ENCODE measurements at regions of chr1 and their contacts with region 1.

Region 1: DNA sequence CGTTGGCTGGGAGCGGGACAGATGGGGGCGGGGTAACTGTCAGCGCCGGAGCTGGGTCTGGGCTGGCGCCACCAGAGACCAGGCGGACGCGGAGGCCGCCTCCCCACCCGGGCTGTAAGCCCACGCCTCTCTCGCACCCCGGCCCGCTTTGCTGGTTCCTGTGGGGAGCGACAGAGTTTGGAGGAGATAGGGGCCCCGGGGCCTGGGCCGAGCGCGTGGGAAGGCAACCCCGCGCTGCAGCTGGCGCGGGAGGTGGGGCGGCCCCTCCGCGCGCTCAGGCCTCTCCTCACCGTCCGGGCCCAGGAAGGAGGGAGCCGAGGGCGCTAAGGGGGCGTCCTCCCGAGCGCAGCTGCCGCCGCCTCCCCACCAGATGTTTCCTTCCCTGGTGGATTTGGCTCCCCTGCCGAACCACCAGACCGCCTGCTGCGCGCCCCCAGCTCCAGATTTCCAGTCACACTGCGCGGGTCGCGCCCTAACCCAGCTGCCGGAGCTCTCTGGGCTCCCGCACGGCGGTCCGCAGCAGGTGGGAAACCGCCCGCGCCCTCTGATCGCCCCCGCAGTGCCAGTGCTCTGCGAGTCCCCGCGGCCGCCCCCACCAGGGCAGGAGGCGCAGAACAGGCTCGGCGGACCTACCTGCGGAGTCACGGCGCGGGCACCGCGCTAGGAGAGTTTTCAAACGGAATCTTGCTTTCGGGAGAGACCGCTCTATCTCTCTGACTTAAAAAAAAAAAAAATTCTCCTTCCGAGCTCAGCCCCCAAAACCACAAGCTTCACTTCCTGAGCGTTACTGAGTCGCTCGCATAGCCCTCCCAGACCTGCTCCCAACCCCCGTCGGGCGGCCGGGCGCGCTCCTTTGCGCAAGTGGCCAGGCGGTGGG is 1.1 kb downstream of the GFI1 start:
- DNase-seq: peak; percentile 90
- H3K4me3 Mint-ChIP-seq: peak overlapping the region; percentile 82
- H3K27ac Mint-ChIP-seq: peak overlapping the region; percentile 90
- H3K4me1 Mint-ChIP-seq: peaks cover 50% of the 10 kb centered on the region
- H3K27me3 Mint-ChIP-seq: no peaks in the 10 kb centered on the region

Region 2: DNA sequence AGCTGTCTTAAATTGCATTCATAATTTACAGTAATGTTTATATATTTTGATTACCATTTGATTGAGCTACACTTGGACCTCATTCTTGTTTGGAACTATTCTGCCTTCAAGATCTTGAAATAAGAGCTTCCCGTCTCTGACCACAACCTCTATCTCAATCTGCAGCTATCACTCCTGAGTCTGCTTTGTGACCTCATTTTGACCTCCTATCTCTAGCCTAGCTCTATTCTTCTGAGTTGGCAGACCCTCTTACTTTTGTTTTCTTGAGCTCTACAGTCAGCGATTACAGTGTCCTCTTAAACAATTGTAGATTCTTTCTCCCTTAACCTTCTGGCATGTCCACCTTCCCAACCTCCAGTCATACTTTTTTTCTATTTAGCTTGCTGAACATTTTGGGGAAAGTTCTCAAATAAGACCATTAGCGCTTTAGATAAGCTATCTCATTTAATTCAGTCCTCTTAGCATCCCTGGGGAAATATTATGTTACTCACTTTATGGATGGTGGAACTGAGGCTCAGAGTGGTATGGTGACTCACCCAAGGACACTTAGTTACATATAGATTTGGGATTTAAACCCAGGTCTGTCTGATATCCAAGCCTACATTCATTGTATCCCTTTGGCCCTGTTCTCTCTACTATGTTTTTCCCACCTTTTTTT is 167.7 kb before region 1 on chr1:
- CTCF ChIA-PET with region 1: interaction called, 33 read pairs
- POLR2A ChIA-PET with region 1: interaction called, 10 read pairs
- DNase-seq: peak; percentile 40
- H3K4me3 Mint-ChIP-seq: peak overlapping the region; percentile 28
- H3K27ac Mint-ChIP-seq: peak overlapping the region; percentile 79
- H3K4me1 Mint-ChIP-seq: peaks cover 57% of the 10 kb centered on the region
- H3K27me3 Mint-ChIP-seq: no peaks in the 10 kb centered on the region

Region 3: DNA sequence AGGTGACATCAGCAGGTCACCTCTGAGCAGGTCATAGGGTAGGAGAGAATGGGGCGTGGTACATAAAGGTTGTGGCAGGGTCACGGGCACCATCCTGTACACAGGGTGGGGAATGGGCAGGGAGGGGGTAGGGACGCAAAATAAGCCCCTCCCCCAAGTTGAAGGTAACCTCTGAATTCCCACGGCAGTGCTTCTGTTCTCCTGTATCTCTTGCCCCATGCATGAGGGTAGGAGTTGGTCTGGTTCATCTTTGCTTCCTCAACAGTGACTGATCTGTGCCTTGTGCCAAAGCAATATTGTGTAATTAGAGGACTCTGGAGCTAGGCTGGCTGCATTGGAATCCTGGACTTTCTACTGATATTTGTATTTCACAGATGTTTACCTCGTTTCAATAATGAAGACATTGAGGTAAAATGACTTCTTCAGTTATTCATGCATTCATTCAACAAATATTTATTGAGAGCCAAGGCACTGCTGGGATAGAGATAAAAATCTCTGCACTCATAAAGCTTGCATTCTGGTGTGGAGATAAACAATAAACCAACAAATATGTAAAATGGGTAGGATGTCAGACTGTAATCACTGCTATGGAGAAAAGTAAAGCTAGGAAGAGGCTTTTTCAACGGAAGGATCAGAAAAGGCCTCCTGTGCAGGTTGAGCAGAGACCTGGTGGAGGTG is 19.5 kb after region 1 on chr1:
- CTCF ChIA-PET with region 1: interaction called, 22 read pairs
- POLR2A ChIA-PET with region 1: interaction called, 4 read pairs
- DNase-seq: no peak
- H3K4me3 Mint-ChIP-seq: no peak overlapping the region
- H3K27ac Mint-ChIP-seq: peak overlapping the region; percentile 60
- H3K4me1 Mint-ChIP-seq: peaks cover 35% of the 10 kb centered on the region
- H3K27me3 Mint-ChIP-seq: no peaks in the 10 kb centered on the region

Region 4: DNA sequence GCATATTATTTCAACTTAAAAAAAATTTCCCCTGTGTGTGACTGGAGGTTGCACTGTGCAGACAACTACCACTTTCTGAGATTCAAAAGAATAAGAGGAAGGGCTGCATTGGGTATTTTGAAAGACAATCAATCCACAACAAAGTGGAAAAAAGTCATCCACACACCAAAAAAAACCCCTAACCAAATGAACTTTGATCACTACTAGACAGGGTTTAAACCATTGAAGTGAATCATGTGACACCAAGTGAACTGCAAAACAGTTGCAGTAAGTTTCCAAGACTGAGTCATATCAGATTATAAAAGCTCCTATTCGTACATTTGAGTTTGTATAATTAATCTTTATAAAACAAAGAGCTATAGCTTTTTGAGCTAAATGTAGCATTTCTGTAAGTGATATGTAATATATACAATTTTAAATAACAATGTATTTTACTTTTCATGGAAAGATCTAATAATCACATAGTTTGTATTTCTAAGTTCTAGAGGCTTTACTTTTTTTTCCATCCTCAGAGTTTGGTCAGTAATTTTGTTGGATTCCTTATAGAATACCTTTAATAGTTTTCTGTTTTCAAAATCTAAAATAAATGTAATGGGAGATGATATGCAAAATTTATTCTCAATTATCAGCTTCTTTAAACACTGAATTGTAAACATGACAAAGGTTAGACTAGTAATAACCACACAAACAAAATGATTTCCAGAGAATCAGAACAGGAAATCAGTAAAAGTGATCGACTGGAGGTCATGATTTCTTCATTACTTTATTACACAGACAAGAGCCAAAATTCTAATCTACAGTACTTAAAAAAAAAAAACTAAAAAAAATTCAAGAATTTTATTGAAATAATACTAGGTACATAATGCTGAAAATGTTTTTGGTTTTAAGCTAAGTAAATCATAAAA is 51.6 kb after region 1 on chr1:
- CTCF ChIA-PET with region 1: interaction called, 22 read pairs
- POLR2A ChIA-PET with region 1: interaction called, 35 read pairs
- DNase-seq: peak; percentile 62
- H3K4me3 Mint-ChIP-seq: peak overlapping the region; percentile 65
- H3K27ac Mint-ChIP-seq: peak overlapping the region; percentile 91
- H3K4me1 Mint-ChIP-seq: peaks cover 78% of the 10 kb centered on the region
- H3K27me3 Mint-ChIP-seq: no peaks in the 10 kb centered on the region

Region 5: GRCh38 chr1:92583821-92584760 is 98.5 kb after region 1 on chr1:
- CTCF ChIA-PET with region 1: interaction called, 12 read pairs
- POLR2A ChIA-PET with region 1: interaction called, 3 read pairs
- DNase-seq: peak; percentile 35
- H3K4me3 Mint-ChIP-seq: peak overlapping the region; percentile 50
- H3K27ac Mint-ChIP-seq: peak overlapping the region; percentile 97
- H3K4me1 Mint-ChIP-seq: peaks cover 65% of the 10 kb centered on the region
- H3K27me3 Mint-ChIP-seq: no peaks in the 10 kb centered on the region

Measured in activated CD4-positive, alpha-beta T cell treated with anti-CD3 and anti-CD28 coated beads, Interleukin-2, amount 10 ng/mL, durations not matched to agents 7 days and 5 days (primary cell).